Heart right ventricle (tissue), 16 donors: ENCODE measurements at regions of chr18 and their contacts with region 1.

Region 1: GRCh38 chr18:67217551-67218166 is 298.9 kb downstream of the DSEL start:
- DNase-seq: peak in 1 of 2 donors; percentile 33
- ATAC-seq: peak in 7 of 8 donors; percentile 51 to 76 (median 67)
- H3K4me3 ChIP-seq: no peak overlapping the region
- H3K27ac ChIP-seq: no peak overlapping the region
- H3K4me1 ChIP-seq: no peaks in the 10 kb centered on the region
- H3K27me3 ChIP-seq: no peaks in the 10 kb centered on the region
- CTCF ChIP-seq: peak; percentile 61 to 85 (median 80)

Region 2: GRCh38 chr18:67132919-67133318 is 84.7 kb before region 1 on chr18:
- intact Hi-C with region 1: no loop called
- DNase-seq: no peak
- ATAC-seq: no peak
- H3K4me3 ChIP-seq: no peak overlapping the region
- H3K27ac ChIP-seq: no peak overlapping the region
- H3K4me1 ChIP-seq: no peaks in the 10 kb centered on the region
- H3K27me3 ChIP-seq: no peaks in the 10 kb centered on the region
- CTCF ChIP-seq: no peak

Region 3: DNA sequence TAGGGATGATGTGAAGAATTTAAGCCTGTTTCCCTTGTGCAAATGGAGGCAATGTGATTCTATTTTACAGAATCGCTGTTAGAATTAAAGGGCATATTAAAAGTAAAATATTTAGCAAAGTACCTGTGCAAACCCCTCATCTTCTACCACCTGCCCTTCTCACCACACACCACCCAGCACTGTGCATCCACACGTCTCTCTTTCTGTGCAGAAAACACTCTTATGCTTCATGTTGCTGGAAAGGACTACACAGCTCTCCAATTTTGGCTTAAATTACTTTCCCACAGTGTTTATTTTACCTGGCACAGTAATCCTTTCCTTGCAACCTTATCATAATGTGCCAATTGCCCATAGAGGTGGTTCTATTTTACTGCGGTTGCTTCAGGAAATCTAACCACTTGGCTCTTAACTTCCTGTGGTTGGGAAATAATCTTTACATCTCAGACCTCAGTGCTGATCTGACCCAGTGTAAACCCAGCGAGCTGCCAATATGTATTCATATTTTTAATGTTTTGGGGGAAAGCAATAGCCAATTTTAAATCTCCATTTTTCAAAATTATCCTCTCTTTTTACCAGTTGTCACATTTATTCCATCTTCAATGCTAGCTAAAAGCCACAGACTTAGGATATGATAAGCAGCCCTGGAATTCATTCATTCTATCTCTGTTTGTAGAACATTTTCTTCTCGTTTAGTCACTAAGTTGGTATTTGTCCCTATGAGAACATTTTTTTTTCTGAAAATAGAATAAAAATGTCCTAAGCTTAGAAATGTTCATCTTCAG is 48.0 kb after region 1 on chr18:
- intact Hi-C with region 1: loop called in 1 of 10 experiments (anchors 5 kb)
- DNase-seq: no peak
- ATAC-seq: peak in 3 of 8 donors; percentile 41 to 75 (median 55)
- H3K4me3 ChIP-seq: no peak overlapping the region
- H3K27ac ChIP-seq: peak overlapping the region in 4 of 10 donors; percentile 4 to 60 (median 34)
- H3K4me1 ChIP-seq: peaks cover 0 to 20% (median 0%) of the 10 kb centered on the region in 9 donors
- H3K27me3 ChIP-seq: no peaks in the 10 kb centered on the region
- CTCF ChIP-seq: no peak

Region 4: DNA sequence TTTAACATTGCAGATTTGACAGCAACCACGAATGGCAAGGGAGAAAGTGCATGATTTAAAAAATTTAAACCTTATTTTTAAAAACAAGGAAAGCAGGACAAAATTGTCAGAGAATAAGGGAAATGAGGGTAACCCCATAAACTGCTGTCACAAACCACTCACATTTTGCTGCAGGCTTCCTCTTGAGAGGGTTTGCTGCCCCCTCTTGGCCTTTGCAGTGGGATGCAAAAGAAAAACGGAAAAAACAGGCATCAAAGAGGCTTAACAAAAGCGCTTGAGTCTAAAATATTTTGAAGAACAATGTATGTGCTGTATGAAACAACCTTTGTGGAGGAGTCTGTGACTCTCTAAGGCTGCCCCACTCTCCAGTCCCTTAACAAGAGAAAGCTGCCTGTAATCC is 1405.7 kb after region 1 on chr18:
- intact Hi-C with region 1: loop called in 2 of 10 experiments (anchors 2 to 10 kb)
- DNase-seq: peak in 1 of 2 donors; percentile 7
- ATAC-seq: peak in 1 of 8 donors; percentile 34
- H3K4me3 ChIP-seq: no peak overlapping the region
- H3K27ac ChIP-seq: no peak overlapping the region
- H3K4me1 ChIP-seq: no peaks in the 10 kb centered on the region
- H3K27me3 ChIP-seq: no peaks in the 10 kb centered on the region
- CTCF ChIP-seq: peak; percentile 8 to 67 (median 58)

Region 5: GRCh38 chr18:68735483-68736343 is 1518.1 kb after region 1 on chr18:
- intact Hi-C with region 1: loop called in 4 of 10 experiments (anchors 5 to 10 kb)
- DNase-seq: no peak
- ATAC-seq: peak in 6 of 8 donors; percentile 37 to 76 (median 50)
- H3K4me3 ChIP-seq: peak overlapping the region in 1 of 10 donors; percentile 12
- H3K27ac ChIP-seq: no peak overlapping the region
- H3K4me1 ChIP-seq: peaks cover 0 to 6% (median 0%) of the 10 kb centered on the region in 9 donors
- H3K27me3 ChIP-seq: no peaks in the 10 kb centered on the region
- CTCF ChIP-seq: peak in 8 of 9 donors; percentile 31 to 77 (median 66)